CD8-positive, alpha-beta T cell (primary cell): ENCODE measurements at regions of chr5 and their contacts with region 1.

Region 1: DNA sequence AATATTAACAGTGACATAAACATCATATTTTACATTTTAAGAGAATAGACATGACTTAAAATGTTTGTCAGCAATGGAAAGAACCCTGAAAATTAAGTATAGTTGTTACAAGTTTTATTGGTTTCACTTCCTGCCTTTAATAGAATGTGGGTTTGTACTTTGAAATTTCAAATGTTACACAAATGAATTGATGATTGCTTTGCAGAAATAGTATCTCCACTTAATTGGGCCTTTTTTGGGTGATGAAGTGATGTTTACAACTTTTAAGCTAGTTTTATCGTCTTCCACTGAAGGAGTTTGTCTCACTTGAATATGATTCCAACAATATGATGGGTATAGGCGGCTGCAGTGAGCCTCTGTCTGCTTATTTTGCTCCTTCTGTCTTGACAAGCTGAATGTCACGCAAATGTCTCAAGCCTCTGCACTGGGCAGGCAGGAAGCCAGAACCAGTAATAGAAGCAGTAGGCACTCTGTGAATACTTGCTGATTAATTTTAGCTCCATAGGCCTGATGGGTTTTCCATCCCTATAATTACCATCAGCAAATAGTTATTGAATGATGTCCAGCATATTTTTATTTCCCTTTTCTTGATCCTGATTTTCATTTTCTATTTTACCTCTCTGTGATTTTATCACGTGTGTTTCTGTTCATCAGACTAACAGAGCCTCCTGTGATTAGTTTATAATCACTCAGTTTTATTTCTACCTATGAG is 10.6 kb upstream of the NR3C1 start:
- DNase-seq: no peak
- ATAC-seq: no peak
- H3K4me3 ChIP-seq: no peak overlapping the region
- H3K4me3 Mint-ChIP-seq: no peak overlapping the region
- H3K27ac ChIP-seq: no peak overlapping the region
- H3K27ac Mint-ChIP-seq: peak overlapping the region; percentile 9
- H3K4me1 ChIP-seq: no peaks in the 10 kb centered on the region
- H3K4me1 Mint-ChIP-seq: peaks cover 15% of the 10 kb centered on the region
- H3K27me3 ChIP-seq: no peaks in the 10 kb centered on the region
- H3K27me3 Mint-ChIP-seq: no peaks in the 10 kb centered on the region
- CTCF ChIP-seq: no peak

Region 2: GRCh38 chr5:141849375-141850243 is 1564.5 kb before region 1 on chr5:
- CTCF ChIA-PET with region 1: no interaction called
- POLR2A ChIA-PET with region 1: no interaction called
- intact Hi-C with region 1: no loop called
- DNase-seq: peak; percentile 42 to 83 (median 70)
- ATAC-seq: peak; percentile 79
- H3K4me3 ChIP-seq: peak overlapping the region; percentile 77 to 84
- H3K4me3 Mint-ChIP-seq: peak overlapping the region; percentile 87
- H3K27ac ChIP-seq: peak overlapping the region; percentile 73
- H3K27ac Mint-ChIP-seq: peak overlapping the region; percentile 82
- H3K4me1 ChIP-seq: peaks cover 7% of the 10 kb centered on the region
- H3K4me1 Mint-ChIP-seq: peaks cover 10% of the 10 kb centered on the region
- H3K27me3 ChIP-seq: no peaks in the 10 kb centered on the region
- H3K27me3 Mint-ChIP-seq: peaks cover 2% of the 10 kb centered on the region
- CTCF ChIP-seq: no peak

Region 3: DNA sequence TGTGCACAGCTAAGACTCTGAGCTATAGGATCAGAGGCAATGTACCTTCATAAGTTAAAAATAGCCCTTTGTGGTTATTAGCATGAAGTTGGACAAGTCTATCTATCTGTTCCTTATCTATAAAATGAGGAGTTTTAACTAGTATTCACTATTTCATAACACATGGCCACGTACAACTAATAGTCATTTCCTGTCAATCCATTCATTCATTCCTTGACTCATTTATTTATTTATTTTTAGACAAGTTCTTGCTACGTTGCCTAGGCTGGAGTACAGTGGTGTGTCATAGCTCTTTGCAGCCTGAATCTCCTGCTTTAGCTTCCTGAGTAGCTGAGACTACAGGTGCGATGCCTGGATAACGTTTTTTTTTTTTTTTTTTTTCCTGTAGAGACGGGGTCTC is 102.7 kb before region 1 on chr5:
- CTCF ChIA-PET with region 1: no interaction called
- POLR2A ChIA-PET with region 1: no interaction called
- intact Hi-C with region 1: no loop called
- DNase-seq: no peak
- ATAC-seq: no peak
- H3K4me3 ChIP-seq: no peak overlapping the region
- H3K4me3 Mint-ChIP-seq: no peak overlapping the region
- H3K27ac ChIP-seq: no peak overlapping the region
- H3K27ac Mint-ChIP-seq: no peak overlapping the region
- H3K4me1 ChIP-seq: no peaks in the 10 kb centered on the region
- H3K4me1 Mint-ChIP-seq: peaks cover 21% of the 10 kb centered on the region
- H3K27me3 ChIP-seq: no peaks in the 10 kb centered on the region
- H3K27me3 Mint-ChIP-seq: no peaks in the 10 kb centered on the region
- CTCF ChIP-seq: no peak

Region 4: GRCh38 chr5:143435210-143435657 is 21.1 kb after region 1 on chr5:
- CTCF ChIA-PET with region 1: interaction called, 8 read pairs
- POLR2A ChIA-PET with region 1: interaction called, 18 read pairs
- intact Hi-C with region 1: no loop called
- DNase-seq: peak in 7 of 9 experiments; percentile 12 to 78 (median 49)
- ATAC-seq: peak; percentile 62
- H3K4me3 ChIP-seq: peak overlapping the region; percentile 44 to 52
- H3K4me3 Mint-ChIP-seq: peak overlapping the region; percentile 94
- H3K27ac ChIP-seq: peak overlapping the region; percentile 64 to 70
- H3K27ac Mint-ChIP-seq: peak overlapping the region; percentile 97
- H3K4me1 ChIP-seq: peaks cover 24% of the 10 kb centered on the region
- H3K4me1 Mint-ChIP-seq: peaks cover 69% of the 10 kb centered on the region
- H3K27me3 ChIP-seq: no peaks in the 10 kb centered on the region
- H3K27me3 Mint-ChIP-seq: no peaks in the 10 kb centered on the region
- CTCF ChIP-seq: no peak